GM10248 (cell line): ENCODE measurements at regions of chr4 and their contacts with region 1.

Region 1: GRCh38 chr4:184588893-184589292 is 60.4 kb downstream of the CASP3 start:
- DNase-seq: no peak
- CTCF ChIP-seq: no peak

Region 2: DNA sequence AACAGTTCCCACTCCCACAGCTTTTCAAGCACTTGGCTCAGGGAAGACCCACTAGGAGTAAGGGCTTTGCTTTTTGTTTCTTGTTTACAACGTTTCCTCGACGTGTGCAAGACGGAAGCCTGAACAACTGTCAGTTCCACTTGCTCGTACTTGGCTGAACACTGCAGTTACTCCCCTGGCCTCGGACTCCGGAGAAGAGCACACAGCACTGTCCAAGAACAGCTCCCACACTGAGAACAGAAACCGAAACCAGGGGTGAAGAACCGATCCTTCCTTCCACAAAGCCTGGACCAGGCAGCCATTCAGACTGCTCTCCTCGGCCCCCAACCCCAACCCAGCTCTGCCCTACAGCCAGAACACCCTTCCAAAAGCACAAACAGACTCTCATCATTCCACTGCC is 140.1 kb before region 1 on chr4:
- CTCF ChIA-PET with region 1: no interaction called
- POLR2A ChIA-PET with region 1: no interaction called
- DNase-seq: peak; percentile 47
- CTCF ChIP-seq: no peak

Region 3: GRCh38 chr4:184599492-184600135 is 10.7 kb after region 1 on chr4:
- CTCF ChIA-PET with region 1: interaction called, 10 read pairs
- POLR2A ChIA-PET with region 1: no interaction called
- DNase-seq: no peak
- CTCF ChIP-seq: no peak

Region 4: GRCh38 chr4:185219551-185220344 is 630.9 kb after region 1 on chr4:
- CTCF ChIA-PET with region 1: no interaction called
- POLR2A ChIA-PET with region 1: no interaction called
- DNase-seq: peak; percentile 50
- CTCF ChIP-seq: no peak